CD4-positive, alpha-beta memory T cell (primary cell): ENCODE measurements at regions of chr9 and their contacts with region 1.

Region 1: GRCh38 chr9:97710356-97711222 is 13.4 kb upstream of the XPA start:
- DNase-seq: peak; percentile 55 to 65 (median 60)
- H3K4me3 ChIP-seq: no peak overlapping the region
- H3K4me3 Mint-ChIP-seq: peak overlapping the region in 6 of 8 donors; percentile 13 to 55 (median 42)
- H3K27ac ChIP-seq: no peak overlapping the region
- H3K27ac Mint-ChIP-seq: peak overlapping the region in 3 of 7 donors; percentile 30 to 57 (median 45)
- H3K4me1 ChIP-seq: peaks cover 34% of the 10 kb centered on the region
- H3K4me1 Mint-ChIP-seq: peaks cover 23 to 44% (median 30%) of the 10 kb centered on the region in 4 donors
- H3K27me3 ChIP-seq: peaks cover 10% of the 10 kb centered on the region
- H3K27me3 Mint-ChIP-seq: peaks cover 4 to 7% of the 10 kb centered on the region in 2 donors

Region 2: DNA sequence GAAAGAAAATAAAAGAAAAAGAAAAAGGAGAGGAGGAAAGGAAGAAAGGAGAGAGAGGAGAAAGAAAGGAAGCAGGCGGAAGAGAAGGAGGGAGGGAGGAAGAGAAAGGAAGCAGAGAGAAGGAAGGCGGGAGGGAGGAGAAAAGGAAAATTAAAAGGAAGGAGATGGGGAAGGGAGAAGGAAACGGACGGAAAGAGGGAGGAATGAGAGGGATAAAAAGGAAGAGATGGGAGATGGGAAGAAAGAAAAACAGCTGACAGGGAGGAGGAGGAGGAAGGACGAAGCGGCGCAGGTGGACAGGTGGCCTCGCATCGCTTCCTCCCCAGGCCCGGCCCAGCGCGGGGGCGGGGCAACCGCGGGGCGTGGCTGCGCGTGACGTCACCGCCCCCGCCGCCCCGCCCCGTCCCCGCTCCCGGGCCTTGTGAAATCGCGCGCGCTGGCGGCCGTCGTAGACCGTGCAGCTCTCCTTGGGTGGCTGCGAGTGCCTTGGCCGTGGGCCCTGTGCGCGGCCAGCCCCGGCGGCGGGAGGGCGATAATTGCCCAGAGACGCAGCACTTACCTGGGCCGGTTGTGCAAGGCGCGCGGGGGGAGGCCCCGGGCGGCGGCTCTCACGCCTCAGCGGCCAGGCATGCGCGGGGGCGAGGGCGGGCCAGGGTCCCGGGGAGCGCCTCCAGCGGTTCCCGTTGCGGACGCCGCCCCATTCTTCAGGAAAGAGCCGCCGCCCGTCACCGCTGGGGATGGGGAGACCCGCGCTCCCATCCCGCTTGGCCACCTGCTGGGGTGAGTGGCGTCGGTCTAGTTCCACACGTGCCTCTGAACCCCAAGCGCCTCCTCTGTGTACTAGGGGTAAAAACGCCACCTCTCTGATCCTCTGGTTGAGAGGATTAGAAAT is 92.8 kb after region 1 on chr9:
- CTCF ChIA-PET with region 1: no interaction called
- POLR2A ChIA-PET with region 1: no interaction called
- intact Hi-C with region 1: loop called (anchors 5 kb)
- DNase-seq: peak; percentile 72 to 78 (median 75)
- H3K4me3 ChIP-seq: peak overlapping the region; percentile 11 to 42
- H3K4me3 Mint-ChIP-seq: peak overlapping the region; percentile 80 to 88 (median 84)
- H3K27ac ChIP-seq: no peak overlapping the region
- H3K27ac Mint-ChIP-seq: peak overlapping the region in 6 of 7 donors; percentile 25 to 91 (median 86)
- H3K4me1 ChIP-seq: peaks cover 5% of the 10 kb centered on the region
- H3K4me1 Mint-ChIP-seq: peaks cover 3 to 10% (median 6%) of the 10 kb centered on the region in 4 donors
- H3K27me3 ChIP-seq: no peaks in the 10 kb centered on the region
- H3K27me3 Mint-ChIP-seq: peaks cover 3 to 10% of the 10 kb centered on the region in 2 donors

Region 3: GRCh38 chr9:97853844-97854695 is 143.5 kb after region 1 on chr9:
- CTCF ChIA-PET with region 1: no interaction called
- POLR2A ChIA-PET with region 1: no interaction called
- intact Hi-C with region 1: loop called (anchors 1 kb)
- DNase-seq: peak; percentile 62 to 68 (median 65)
- H3K4me3 ChIP-seq: peak overlapping the region in 1 of 2 donors; percentile 24
- H3K4me3 Mint-ChIP-seq: peak overlapping the region; percentile 84 to 92 (median 89)
- H3K27ac ChIP-seq: no peak overlapping the region
- H3K27ac Mint-ChIP-seq: peak overlapping the region in 5 of 7 donors; percentile 32 to 81 (median 46)
- H3K4me1 ChIP-seq: peaks cover 47% of the 10 kb centered on the region
- H3K4me1 Mint-ChIP-seq: peaks cover 19 to 69% (median 28%) of the 10 kb centered on the region in 4 donors
- H3K27me3 ChIP-seq: peaks cover 66% of the 10 kb centered on the region
- H3K27me3 Mint-ChIP-seq: peaks cover 60 to 70% of the 10 kb centered on the region in 2 donors

Region 4: GRCh38 chr9:98034593-98035546 is 324.3 kb after region 1 on chr9:
- CTCF ChIA-PET with region 1: interaction called, 3 read pairs
- POLR2A ChIA-PET with region 1: no interaction called
- intact Hi-C with region 1: loop called (anchors 1 kb)
- DNase-seq: peak; percentile 80 to 88 (median 84)
- H3K4me3 ChIP-seq: no peak overlapping the region
- H3K4me3 Mint-ChIP-seq: peak overlapping the region in 3 of 8 donors; percentile 32 to 64 (median 38)
- H3K27ac ChIP-seq: no peak overlapping the region
- H3K27ac Mint-ChIP-seq: peak overlapping the region in 5 of 7 donors; percentile 28 to 64 (median 61)
- H3K4me1 ChIP-seq: peaks cover 6% of the 10 kb centered on the region
- H3K4me1 Mint-ChIP-seq: peaks cover 6 to 9% (median 6%) of the 10 kb centered on the region in 4 donors
- H3K27me3 ChIP-seq: no peaks in the 10 kb centered on the region
- H3K27me3 Mint-ChIP-seq: peaks cover 1 to 4% of the 10 kb centered on the region in 2 donors

Region 5: DNA sequence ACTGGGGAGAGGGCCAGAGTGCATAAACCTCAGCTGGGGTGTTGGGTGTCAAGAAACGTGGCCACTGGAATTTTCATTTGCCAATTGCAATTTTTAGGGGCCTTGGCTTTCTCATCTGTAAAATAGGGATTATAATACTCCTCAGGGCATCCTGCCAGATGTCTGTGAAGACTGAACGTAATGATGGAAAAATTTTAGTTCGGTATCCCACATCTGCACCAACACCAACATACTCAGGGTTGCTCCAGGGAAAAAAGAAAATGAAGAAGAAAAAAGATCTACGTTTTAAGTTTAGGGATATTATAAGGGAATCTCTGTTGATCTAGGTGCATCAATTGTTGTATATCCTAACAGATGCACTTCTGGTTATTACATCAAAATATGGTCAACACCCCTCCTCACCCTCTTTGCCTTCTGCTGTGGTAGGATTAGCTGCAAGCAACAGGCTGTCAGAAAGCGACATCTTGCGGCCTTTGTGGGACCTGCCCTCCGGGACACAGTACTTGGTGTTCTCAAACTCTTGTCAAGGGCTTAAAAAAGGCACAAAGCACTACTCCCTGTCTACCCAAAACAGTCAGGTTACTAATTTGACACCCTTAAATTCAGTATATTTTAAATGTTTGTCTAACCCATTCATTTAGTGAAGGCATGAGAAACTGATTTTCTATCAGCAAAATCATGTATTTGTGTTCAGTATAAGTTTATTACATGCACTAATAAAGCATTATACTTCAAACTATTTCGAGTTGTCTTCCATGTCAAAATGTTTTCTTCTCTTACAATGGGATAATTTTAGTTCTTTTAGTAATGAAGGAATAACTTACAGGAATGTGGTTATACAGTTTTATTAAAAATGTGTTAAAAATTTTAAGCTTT is 553.1 kb after region 1 on chr9:
- CTCF ChIA-PET with region 1: interaction called, 3 read pairs
- POLR2A ChIA-PET with region 1: no interaction called
- intact Hi-C with region 1: loop called (anchors 1 kb)
- DNase-seq: peak; percentile 78 to 84 (median 80)
- H3K4me3 ChIP-seq: no peak overlapping the region
- H3K4me3 Mint-ChIP-seq: no peak overlapping the region
- H3K27ac ChIP-seq: no peak overlapping the region
- H3K27ac Mint-ChIP-seq: peak overlapping the region in 2 of 7 donors; percentile 31 to 63
- H3K4me1 ChIP-seq: no peaks in the 10 kb centered on the region
- H3K4me1 Mint-ChIP-seq: peaks cover 0 to 5% (median 3%) of the 10 kb centered on the region in 4 donors
- H3K27me3 ChIP-seq: no peaks in the 10 kb centered on the region
- H3K27me3 Mint-ChIP-seq: peaks cover 0 to 6% of the 10 kb centered on the region in 2 donors